ENCODE measurements at regions of chr4 and their contacts with region 1.

Region 1: DNA sequence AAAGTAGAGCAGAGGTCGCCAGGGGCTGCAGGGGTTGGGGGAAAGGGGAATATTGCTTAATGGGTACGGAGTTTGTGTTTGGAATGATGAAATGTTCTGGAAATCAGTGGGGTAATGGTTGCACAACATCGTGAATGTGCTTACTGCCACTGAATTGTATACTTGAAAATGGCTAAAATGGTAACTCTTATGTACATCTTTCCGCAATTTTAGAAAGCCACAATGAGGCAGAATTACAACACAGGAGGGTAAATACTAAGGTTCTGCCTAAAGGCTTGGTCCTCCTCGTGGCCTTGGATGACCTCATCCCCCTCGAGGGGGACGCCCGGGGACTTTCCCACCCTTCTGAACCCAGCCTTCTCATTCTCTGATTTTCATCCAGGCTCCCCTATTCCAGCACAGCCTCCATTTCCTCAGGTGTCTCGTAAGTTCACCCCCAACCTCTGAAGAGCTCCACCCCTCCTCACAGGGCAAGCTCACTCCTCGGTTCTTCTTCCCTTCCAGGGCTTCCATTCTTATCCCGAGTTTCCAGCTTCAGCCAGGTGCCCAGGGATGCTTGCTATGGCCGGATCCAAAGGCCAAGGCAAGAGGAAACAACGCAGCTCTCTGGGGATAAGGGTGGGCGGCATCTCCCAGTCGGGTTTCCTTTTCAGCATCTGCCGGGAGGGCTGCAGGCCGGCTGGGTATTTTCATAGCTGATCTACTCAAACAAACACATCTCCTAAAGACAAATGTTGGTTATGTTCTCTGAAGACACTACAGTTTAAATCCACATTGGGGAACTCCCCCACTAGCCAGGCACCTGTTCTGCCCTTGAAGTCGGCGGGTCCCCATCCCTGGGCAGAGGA is 71.3 kb upstream of the ACSL1 start:
- DNase-seq: peak; percentile 38
- ATAC-seq: peak; percentile 84
- H3K4me3 Mint-ChIP-seq: peak overlapping the region; percentile 78
- H3K27ac Mint-ChIP-seq: peak overlapping the region; percentile 80
- H3K4me1 Mint-ChIP-seq: peaks cover 45% of the 10 kb centered on the region
- H3K27me3 Mint-ChIP-seq: peaks cover 9% of the 10 kb centered on the region
- CTCF ChIP-seq: no peak

Region 2: DNA sequence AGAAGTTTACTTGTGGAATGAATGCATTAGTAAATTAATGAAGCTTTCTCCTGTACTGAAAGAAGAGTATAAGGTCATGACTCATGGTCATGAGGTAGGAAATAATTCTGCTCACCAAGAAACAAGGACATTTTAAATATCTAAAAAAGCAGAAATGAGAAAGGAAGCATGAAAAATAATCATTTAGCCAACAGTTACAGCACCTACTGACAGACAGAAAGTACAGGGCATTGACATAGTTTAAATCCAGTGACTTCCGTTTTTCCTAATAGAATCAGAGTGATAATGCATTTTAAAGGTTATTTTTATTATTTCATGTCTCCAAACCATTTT is 40.8 kb before region 1 on chr4:
- CTCF ChIA-PET with region 1: no interaction called
- POLR2A ChIA-PET with region 1: interaction called, 15 read pairs
- intact Hi-C with region 1: loop called (anchors 1 kb)
- DNase-seq: no peak
- ATAC-seq: peak; percentile 61
- H3K4me3 Mint-ChIP-seq: peak overlapping the region; percentile 57
- H3K27ac Mint-ChIP-seq: no peak overlapping the region
- H3K4me1 Mint-ChIP-seq: peaks cover 51% of the 10 kb centered on the region
- H3K27me3 Mint-ChIP-seq: no peaks in the 10 kb centered on the region
- CTCF ChIP-seq: no peak

Region 3: DNA sequence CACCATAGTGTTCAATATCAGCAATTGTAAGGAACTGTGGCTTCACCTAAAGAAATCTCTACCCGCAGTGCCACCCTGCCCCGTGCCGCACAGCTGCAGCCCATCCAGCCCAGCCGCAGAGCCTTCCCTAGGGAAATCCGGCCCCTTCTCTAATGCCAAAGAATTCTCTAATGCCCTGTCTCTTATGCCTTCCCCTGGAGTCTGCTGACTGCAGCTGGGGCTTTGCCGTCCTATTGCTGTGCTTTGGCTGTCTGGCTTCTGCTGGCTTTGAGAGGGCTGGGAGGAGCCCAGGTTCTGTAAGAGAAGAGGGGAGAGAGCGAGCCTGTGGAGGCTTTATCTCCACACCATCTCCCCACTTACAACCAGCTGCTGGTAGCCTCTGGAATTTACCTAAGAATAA is 35.3 kb after region 1 on chr4:
- CTCF ChIA-PET with region 1: no interaction called
- POLR2A ChIA-PET with region 1: no interaction called
- intact Hi-C with region 1: loop called (anchors 1 kb)
- DNase-seq: no peak
- ATAC-seq: no peak
- H3K4me3 Mint-ChIP-seq: no peak overlapping the region
- H3K27ac Mint-ChIP-seq: no peak overlapping the region
- H3K4me1 Mint-ChIP-seq: no peaks in the 10 kb centered on the region
- H3K27me3 Mint-ChIP-seq: peaks cover 2% of the 10 kb centered on the region
- CTCF ChIP-seq: no peak

Measured in activated B cell treated with CpG ODN at 0.5 μM for 24 hours (primary cell).